ENCODE measurements at regions of chr1 and their contacts with region 1.

Region 1: DNA sequence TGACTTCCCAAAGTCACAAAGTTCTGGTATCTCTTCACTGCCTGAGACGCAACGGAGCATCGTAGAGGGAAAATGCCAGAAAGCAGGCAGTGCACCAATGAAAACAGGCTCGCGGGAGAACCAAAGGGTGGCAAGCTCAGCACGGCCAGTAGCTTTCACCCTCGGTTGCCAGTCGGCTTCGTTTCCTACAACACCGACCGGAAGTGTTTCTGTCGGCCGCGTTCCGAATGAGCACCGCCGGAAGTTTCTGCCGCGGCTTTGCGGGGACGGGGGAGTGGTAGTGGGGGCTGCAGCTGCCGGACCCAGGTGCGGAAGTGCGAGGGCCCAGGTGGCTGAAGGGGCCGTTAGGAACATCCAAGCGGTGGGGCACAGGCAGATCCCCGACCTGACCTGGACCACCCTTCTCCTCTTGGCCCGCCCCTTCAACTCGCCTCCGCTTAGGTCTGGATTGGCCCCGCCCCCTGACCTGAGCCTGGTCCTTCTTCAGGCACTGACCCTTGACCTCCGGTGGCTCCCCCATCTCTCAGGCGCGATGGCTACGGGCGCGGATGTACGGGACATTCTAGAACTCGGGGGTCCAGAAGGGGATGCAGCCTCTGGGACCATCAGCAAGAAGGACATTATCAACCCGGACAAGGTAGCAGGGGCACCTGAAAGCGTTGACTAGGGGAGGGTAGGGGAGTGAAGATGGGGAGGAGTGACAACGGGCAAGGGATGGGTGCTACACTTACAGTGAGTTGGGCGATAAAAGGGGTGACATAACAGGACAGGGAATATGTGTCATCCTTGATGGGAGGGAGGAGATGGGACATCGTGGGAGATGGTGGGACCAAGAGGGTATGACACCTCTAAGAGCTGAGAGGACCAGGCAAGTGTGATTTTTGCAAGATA is at the start of gene DMAP1:
- DNase-seq: peak; percentile 84 to 92 (median 90)
- ATAC-seq: peak; percentile 93
- H3K4me3 ChIP-seq: peak within 1 kb of the TSS; percentile 55
- H3K27ac ChIP-seq: peak within 1 kb of the TSS; percentile 53; the same call in 2 of the 3 replicates
- H3K4me1 ChIP-seq: peaks cover 7 to 10% of the 10 kb centered on the region in 2 experiments; a peak in 4 of 5 replicates
- H3K27me3 ChIP-seq: 0 out of 5 replicates have a peak, but pooled peaks cover 0 to 1% of the 10 kb centered on the region in 2 experiments
- CTCF ChIP-seq: peak in 2 of 3 experiments; percentile 28 to 39; a peak in 4 of 6 replicates
- EP300 ChIP-seq: peak; percentile 27; the same call in 1 of the 2 replicates
- POLR2A ChIP-seq: peak; percentile 77
- RAD21 ChIP-seq: peak; percentile 41 to 56; a peak in 3 of 4 replicates
- polyA plus RNA-seq, gene DMAP1: 1.5 to 4.0 TPM

Region 2: DNA sequence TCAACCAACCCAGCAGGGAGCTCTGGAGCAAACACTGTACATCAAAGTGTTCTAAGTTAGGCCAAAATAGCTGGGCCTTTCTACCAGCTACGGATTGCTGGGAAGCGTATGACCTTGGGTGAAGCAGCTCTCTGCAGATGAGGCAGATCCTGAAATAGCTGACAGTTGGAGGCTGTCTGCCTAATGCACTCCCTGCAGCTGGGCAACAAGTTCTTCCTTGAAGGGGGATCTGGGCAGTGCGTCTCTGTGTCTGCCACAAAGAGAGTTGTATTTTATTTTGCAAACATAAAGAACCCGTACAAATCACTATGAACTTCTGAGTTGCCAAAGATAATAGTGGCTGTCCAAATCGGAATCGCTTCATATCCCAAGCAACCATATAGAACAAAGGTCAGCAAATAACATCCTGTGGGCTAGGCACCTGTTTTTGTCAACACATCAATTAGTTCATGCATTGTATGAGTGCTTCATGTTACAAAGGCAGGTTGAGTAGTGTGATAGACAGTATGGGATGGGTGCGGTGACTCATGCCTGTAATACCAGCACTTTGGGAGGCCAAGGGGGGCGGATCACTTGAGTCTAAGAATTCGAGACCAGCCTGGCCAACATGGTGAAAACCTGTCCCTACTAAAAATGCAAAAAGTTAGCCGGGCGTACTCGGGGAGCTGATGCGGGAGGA is 124.0 kb before region 1 on chr1:
- CTCF ChIA-PET with region 1: no interaction called
- POLR2A ChIA-PET with region 1: interaction called, 7 read pairs
- in situ Hi-C with region 1: no loop called
- intact Hi-C with region 1: loop called (anchors 1 kb)
- DNase-seq: peak in 1 of 4 experiments; percentile 46
- ATAC-seq: peak; percentile 56
- H3K4me3 ChIP-seq: no peak overlapping the region
- H3K27ac ChIP-seq: no peak overlapping the region
- H3K4me1 ChIP-seq: peaks cover 3 to 19% of the 10 kb centered on the region in 2 experiments; a peak in 3 of 5 replicates
- H3K27me3 ChIP-seq: no peaks in the 10 kb centered on the region; a peak in 1 of 5 replicates
- CTCF ChIP-seq: no peak
- EP300 ChIP-seq: no peak
- POLR2A ChIP-seq: no peak
- RAD21 ChIP-seq: no peak

Region 3: DNA sequence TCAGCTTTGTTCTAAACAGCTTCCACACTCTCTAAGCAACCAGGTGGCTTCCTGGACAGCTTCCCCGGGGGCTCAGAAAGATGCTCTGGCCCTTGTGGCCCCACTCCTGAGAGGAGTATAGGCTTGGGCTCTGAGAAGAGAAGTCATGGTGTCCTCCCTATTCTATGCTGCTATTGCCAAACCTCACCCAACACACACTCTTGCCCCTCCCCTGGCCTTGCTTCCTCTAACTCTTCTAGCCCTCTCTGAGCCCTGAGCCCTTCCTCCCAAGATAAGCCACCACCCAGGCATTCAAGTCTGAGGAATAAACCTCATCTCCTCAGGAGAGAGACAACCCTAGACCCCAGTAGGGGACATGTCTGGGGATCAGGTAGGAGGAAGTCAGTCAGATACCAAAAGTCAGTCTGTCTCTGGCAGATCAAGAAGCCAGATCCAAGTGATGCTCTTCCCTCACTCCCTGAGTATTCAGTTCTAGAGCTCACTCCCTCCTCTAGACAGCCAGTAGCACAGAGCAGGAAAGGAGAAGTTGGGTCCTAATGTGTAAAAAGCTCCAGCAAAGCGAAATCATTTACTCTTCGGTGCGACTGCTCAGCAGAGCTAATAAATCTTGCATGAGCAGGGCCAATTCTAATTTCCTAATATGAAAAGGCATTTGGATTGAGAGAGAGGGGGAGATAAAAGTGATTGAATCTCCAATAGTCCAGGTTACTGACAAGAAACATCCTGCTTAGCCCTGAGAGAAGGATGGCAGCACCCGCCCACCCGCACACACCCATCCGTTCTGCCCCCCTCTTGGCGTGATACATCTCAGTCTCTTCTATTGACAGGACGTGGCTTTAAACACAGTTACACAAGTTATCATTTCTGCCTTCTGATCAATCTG is 50.3 kb after region 1 on chr1:
- CTCF ChIA-PET with region 1: no interaction called
- POLR2A ChIA-PET with region 1: no interaction called
- in situ Hi-C with region 1: no loop called
- intact Hi-C with region 1: no loop called
- DNase-seq: no peak
- ATAC-seq: peak; percentile 38; the same call in 2 of the 3 replicates
- H3K4me3 ChIP-seq: no peak overlapping the region
- H3K27ac ChIP-seq: no peak overlapping the region
- H3K4me1 ChIP-seq: peaks cover 5 to 16% of the 10 kb centered on the region in 2 experiments; a peak in 4 of 5 replicates
- H3K27me3 ChIP-seq: no peaks in the 10 kb centered on the region
- CTCF ChIP-seq: no peak
- EP300 ChIP-seq: no peak
- POLR2A ChIP-seq: no peak
- RAD21 ChIP-seq: no peak

Region 4: GRCh38 chr1:44318097-44319088 is 104.9 kb after region 1 on chr1:
- CTCF ChIA-PET with region 1: interaction called, 6 read pairs
- POLR2A ChIA-PET with region 1: interaction called, 4 read pairs
- in situ Hi-C with region 1: no loop called
- intact Hi-C with region 1: loop called (anchors 2 kb)
- DNase-seq: peak; percentile 65 to 81 (median 67)
- ATAC-seq: peak; percentile 81
- H3K4me3 ChIP-seq: no peak overlapping the region
- H3K27ac ChIP-seq: no peak overlapping the region
- H3K4me1 ChIP-seq: no peaks in the 10 kb centered on the region; a peak in 1 of 5 replicates
- H3K27me3 ChIP-seq: no peaks in the 10 kb centered on the region
- CTCF ChIP-seq: peak; percentile 71 to 92 (median 88)
- EP300 ChIP-seq: no peak
- POLR2A ChIP-seq: no peak
- RAD21 ChIP-seq: peak; percentile 52 to 68